ENCODE measurements at regions of chr1 and their contacts with region 1.

Region 1: DNA sequence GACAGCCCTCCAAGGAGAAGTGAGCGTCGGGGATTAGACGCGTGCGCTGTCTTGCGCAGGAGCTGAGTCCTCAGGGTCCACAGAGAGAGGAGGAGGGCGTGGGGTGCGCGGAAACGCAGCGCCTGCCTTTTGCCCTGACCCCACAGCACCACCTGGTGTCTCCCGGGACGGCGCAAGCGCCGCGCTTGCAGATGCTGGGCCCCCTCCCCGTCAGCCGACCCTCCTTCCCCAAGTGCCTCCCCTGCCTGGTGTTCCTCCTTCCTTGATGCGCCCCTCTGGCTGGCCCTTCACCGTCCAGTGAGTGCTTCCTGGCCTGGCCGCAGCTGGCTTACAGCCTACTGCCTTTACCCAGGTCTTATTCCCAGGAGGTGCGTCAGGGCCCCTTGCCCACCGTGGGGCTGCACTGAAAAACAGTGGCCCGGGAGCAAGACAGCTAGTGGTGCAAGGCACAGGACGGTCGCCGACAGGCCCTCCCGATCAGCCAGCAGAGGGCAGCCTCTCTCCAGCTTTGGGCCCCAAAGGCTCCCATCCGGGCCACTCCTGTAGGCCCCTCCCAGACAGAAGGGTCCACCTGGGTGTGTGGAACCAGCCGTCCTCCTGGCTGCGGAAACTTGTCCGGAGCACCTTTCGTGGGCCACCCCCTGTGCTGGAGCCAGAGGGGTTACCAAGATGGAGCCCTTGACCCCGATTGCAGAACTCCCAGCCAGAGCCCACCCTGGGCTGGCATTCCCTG is 12.9 kb upstream of the PHLDA3 start:
- DNase-seq: peak; percentile 89
- ATAC-seq: peak; percentile 80
- H3K4me3 Mint-ChIP-seq: peak overlapping the region; percentile 67
- H3K27ac Mint-ChIP-seq: no peak overlapping the region
- H3K4me1 Mint-ChIP-seq: peaks cover 28% of the 10 kb centered on the region
- H3K27me3 Mint-ChIP-seq: peaks cover 16% of the 10 kb centered on the region

Region 2: DNA sequence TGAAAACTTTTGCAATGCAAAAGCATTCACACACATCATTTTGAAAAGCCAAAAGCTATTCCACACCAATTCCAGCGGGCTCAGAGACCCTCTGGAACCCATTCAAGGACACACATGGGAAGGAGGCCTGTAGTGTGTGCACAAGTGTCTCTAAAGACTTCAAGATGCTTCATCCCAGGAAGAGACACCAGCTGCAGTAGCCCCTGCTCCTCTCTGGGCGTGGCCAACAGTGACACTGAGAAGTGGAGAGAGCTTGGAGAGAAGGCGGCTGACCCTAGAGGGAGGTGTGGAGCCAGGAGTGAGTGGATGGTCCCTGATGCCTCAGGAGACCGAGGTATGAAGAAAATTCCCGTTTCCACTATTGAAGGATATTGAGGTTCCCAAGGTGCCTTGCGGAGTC is 45.5 kb before region 1 on chr1:
- CTCF ChIA-PET with region 1: interaction called, 25 read pairs
- DNase-seq: no peak
- ATAC-seq: no peak
- H3K4me3 Mint-ChIP-seq: no peak overlapping the region
- H3K27ac Mint-ChIP-seq: no peak overlapping the region
- H3K4me1 Mint-ChIP-seq: peaks cover 5% of the 10 kb centered on the region
- H3K27me3 Mint-ChIP-seq: peaks cover 35% of the 10 kb centered on the region

Region 3: DNA sequence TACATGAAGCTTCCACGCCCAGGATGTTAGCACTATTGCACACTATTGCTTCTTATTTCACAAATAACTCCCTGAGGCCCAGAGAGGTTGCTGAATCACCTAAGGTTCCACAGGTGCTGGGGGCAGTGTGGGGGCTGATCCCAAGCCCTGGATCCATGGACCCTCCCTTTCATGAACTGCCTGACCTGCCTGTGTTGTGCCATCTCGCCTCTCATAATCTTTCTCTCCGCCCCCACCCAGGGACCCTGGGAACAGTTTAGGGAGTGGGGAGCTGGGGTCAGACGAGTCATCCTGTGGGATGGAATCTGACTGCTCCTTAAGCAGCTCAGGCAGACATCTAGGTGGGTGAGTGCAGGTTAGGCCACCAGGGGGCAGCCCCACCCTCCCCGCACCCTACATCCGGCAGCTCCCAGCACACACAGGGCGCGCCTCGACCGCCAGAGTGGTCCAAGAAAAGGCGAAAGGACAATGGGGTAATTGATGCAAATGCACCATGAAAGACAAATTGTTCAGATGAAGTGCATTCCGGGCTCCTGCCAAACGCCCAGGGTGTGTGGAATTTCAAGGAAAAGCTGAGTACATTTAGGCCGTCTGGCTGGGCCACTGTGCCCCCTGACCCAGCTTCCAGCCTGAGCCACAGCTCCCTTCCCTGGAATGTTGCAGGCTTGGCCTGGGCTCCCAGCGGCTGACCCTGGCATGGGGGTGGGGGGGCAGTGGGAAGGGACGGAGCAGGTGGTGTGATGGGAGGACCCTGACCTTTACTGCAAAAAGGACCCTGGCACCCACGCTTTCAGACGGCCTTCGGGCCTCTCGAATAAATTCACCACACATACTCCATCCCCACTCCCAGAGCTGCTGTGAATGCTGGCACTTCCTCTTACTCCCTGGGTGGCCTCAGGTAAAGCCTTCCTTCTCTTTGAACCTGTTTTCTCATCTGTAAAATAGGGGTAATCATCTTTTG is 33.7 kb before region 1 on chr1:
- CTCF ChIA-PET with region 1: interaction called, 164 read pairs
- DNase-seq: peak; percentile 81
- ATAC-seq: peak; percentile 97
- H3K4me3 Mint-ChIP-seq: no peak overlapping the region
- H3K27ac Mint-ChIP-seq: no peak overlapping the region
- H3K4me1 Mint-ChIP-seq: peaks cover 21% of the 10 kb centered on the region
- H3K27me3 Mint-ChIP-seq: peaks cover 49% of the 10 kb centered on the region

Region 4: GRCh38 chr1:201463071-201463552 is 18.8 kb before region 1 on chr1:
- CTCF ChIA-PET with region 1: interaction called, 52 read pairs
- DNase-seq: no peak
- ATAC-seq: no peak
- H3K4me3 Mint-ChIP-seq: no peak overlapping the region
- H3K27ac Mint-ChIP-seq: no peak overlapping the region
- H3K4me1 Mint-ChIP-seq: peaks cover 8% of the 10 kb centered on the region
- H3K27me3 Mint-ChIP-seq: peaks cover 6% of the 10 kb centered on the region

Region 5: DNA sequence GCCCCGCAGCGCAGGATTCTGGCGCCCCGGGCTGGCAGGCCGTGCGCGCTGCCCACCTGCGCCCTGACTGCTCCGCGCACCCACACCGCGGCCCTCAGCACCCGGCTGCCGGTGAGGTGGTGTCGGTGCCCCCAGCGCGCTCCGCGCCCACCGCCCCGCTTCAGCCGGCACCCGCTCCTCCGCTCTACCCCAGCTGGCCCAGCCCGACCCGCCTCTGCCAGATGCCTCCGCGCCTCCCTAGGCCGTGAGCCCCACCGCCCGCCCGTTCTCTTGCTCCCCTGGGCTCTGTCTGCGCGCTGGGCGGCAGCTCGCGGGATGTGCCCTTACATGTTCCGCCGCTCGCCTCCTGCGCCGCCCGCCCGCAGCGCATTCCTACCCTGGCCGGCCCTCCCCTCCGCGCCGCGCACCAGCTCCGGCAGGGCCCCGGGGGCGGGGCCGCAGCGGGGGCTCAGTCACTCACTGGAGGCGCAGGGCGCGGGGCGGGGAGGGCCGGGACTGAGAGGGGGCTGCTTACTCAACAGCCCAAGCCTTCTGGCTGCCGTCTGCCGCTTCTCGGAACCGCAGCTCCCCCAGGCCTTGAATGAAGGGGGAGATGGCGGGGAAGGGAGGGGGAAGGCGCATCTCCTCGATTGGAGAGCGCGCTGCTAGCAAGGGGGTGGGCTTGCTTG is 12.9 kb before region 1 on chr1 and contains the start of gene PHLDA3:
- CTCF ChIA-PET with region 1: interaction called, 52 read pairs
- DNase-seq: peak; percentile 71
- ATAC-seq: peak; percentile 85
- H3K4me3 Mint-ChIP-seq: peak within 1 kb of the TSS; percentile 76
- H3K27ac Mint-ChIP-seq: peak within 1 kb of the TSS; percentile 54
- H3K4me1 Mint-ChIP-seq: peaks cover 18% of the 10 kb centered on the region
- H3K27me3 Mint-ChIP-seq: peaks cover 39% of the 10 kb centered on the region
- total RNA-seq, gene PHLDA3: 12.9 to 23.5 TPM

Region 6: GRCh38 chr1:201506556-201507359 is 24.8 kb after region 1 on chr1 and contains the start of gene CSRP1:
- CTCF ChIA-PET with region 1: interaction called, 597 read pairs
- DNase-seq: peak; percentile 92
- ATAC-seq: peak; percentile 96
- H3K4me3 Mint-ChIP-seq: peak within 1 kb of the TSS; percentile 94
- H3K27ac Mint-ChIP-seq: peak within 1 kb of the TSS; percentile 90
- H3K4me1 Mint-ChIP-seq: peaks cover 55% of the 10 kb centered on the region
- H3K27me3 Mint-ChIP-seq: no peaks in the 10 kb centered on the region
- total RNA-seq, gene CSRP1: 71.7 to 78.3 TPM

Region 7: DNA sequence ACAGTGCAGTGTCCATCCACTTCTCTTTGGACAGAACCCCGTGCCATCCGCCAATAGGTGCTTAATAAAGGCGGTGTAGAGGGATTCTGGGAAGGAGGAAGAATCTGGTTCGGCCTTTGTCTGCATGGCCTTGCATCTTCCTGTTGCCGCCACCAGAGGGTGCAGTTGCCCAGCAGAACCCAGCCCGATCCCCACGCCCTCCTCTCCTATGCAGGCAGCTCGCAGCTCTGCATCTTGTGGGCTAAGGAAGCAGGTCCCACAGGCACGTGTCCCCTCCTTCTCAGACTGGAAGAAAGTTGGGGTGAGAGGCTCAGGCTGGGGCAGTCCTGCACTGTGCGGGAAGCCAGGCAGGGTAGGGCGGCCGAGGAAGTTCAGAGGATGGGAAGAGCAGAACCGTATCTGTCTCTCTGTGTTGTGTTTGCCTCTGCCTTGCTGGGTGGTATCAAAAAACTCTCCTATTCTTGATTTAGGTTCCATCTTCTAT is 77.8 kb after region 1 on chr1:
- CTCF ChIA-PET with region 1: interaction called, 13 read pairs
- DNase-seq: peak; percentile 76
- ATAC-seq: peak; percentile 94
- H3K4me3 Mint-ChIP-seq: no peak overlapping the region
- H3K27ac Mint-ChIP-seq: no peak overlapping the region
- H3K4me1 Mint-ChIP-seq: peaks cover 3% of the 10 kb centered on the region
- H3K27me3 Mint-ChIP-seq: peaks cover 4% of the 10 kb centered on the region